ENCODE measurements at regions of chr14 and their contacts with region 1.

Region 1: GRCh38 chr14:54483073-54483745 is 5.6 kb downstream of the GMFB start:
- DNase-seq: peak; percentile 71
- H3K4me3 ChIP-seq: peak overlapping the region; percentile 87
- H3K27ac ChIP-seq: peak overlapping the region; percentile 93
- H3K4me1 ChIP-seq: peaks cover 71% of the 10 kb centered on the region
- CTCF ChIP-seq: no peak

Region 2: GRCh38 chr14:54472315-54472714 is 10.9 kb before region 1 on chr14:
- CTCF ChIA-PET with region 1: no interaction called
- POLR2A ChIA-PET with region 1: interaction called, 20 read pairs
- intact Hi-C with region 1: no loop called
- DNase-seq: no peak
- H3K4me3 ChIP-seq: no peak overlapping the region
- H3K27ac ChIP-seq: no peak overlapping the region
- H3K4me1 ChIP-seq: no peaks in the 10 kb centered on the region
- CTCF ChIP-seq: no peak

Region 3: GRCh38 chr14:54627540-54628363 is 144.5 kb after region 1 on chr14:
- CTCF ChIA-PET with region 1: no interaction called
- POLR2A ChIA-PET with region 1: no interaction called
- intact Hi-C with region 1: no loop called
- DNase-seq: no peak
- H3K4me3 ChIP-seq: no peak overlapping the region
- H3K27ac ChIP-seq: no peak overlapping the region
- H3K4me1 ChIP-seq: no peaks in the 10 kb centered on the region
- CTCF ChIP-seq: no peak

Region 4: GRCh38 chr14:54642801-54643697 is 159.8 kb after region 1 on chr14:
- CTCF ChIA-PET with region 1: no interaction called
- POLR2A ChIA-PET with region 1: no interaction called
- intact Hi-C with region 1: no loop called
- DNase-seq: peak; percentile 7
- H3K4me3 ChIP-seq: no peak overlapping the region
- H3K27ac ChIP-seq: no peak overlapping the region
- H3K4me1 ChIP-seq: no peaks in the 10 kb centered on the region
- CTCF ChIP-seq: peak; percentile 55

Measured in OCI-LY7 (cell line).